ENCODE measurements at regions of chrX and their contacts with region 1.

Region 1: GRCh38 chrX:65595460-65595876 is 60.9 kb upstream of the LAS1L start:
- DNase-seq: peak; percentile 99
- H3K4me3 Mint-ChIP-seq: peak overlapping the region; percentile 62
- H3K27ac Mint-ChIP-seq: peak overlapping the region; percentile 98
- H3K4me1 Mint-ChIP-seq: peaks cover 47% of the 10 kb centered on the region
- H3K27me3 Mint-ChIP-seq: no peaks in the 10 kb centered on the region

Region 2: GRCh38 chrX:63754860-63755582 is 1840.4 kb before region 1 on chrX:
- CTCF ChIA-PET with region 1: no interaction called
- intact Hi-C with region 1: loop called (anchors 10 kb)
- DNase-seq: peak; percentile 90
- H3K4me3 Mint-ChIP-seq: peak overlapping the region; percentile 90
- H3K27ac Mint-ChIP-seq: peak overlapping the region; percentile 96
- H3K4me1 Mint-ChIP-seq: peaks cover 29% of the 10 kb centered on the region
- H3K27me3 Mint-ChIP-seq: no peaks in the 10 kb centered on the region

Region 3: DNA sequence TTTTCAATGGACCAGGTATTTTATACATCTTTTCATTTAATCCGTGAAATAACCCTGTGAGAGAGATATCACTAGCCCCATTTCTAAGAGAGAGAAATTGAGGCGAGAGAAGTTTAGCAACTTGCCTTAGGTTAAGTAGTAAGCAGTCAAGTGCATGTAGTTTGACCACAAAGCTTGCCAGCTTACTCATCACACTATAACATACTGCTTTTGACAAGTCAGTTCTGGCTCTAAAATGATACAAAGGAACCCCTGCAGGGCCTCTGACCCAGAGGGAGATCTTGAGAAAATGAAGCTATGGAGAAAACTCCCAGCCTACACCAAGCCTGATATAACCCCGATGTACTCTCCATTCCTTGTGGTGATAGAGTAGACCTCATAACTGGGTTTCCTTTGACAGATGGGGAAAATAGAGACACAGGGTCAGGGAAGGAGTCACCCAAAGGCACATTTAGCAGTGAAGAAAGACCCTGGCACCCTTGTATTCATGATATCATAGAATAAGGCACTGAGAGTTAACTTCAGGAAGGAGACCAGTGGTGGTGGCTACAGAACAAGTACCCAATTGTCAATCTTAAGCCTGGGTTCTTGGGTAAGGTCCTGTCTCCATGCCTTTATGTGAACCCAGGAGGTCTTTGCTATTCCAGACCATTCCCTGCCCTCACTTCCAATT is 11.7 kb after region 1 on chrX:
- CTCF ChIA-PET with region 1: interaction called, 6 read pairs
- intact Hi-C with region 1: loop called (anchors 1 kb)
- DNase-seq: peak; percentile 46
- H3K4me3 Mint-ChIP-seq: no peak overlapping the region
- H3K27ac Mint-ChIP-seq: peak overlapping the region; percentile 68
- H3K4me1 Mint-ChIP-seq: peaks cover 66% of the 10 kb centered on the region
- H3K27me3 Mint-ChIP-seq: no peaks in the 10 kb centered on the region

Region 4: DNA sequence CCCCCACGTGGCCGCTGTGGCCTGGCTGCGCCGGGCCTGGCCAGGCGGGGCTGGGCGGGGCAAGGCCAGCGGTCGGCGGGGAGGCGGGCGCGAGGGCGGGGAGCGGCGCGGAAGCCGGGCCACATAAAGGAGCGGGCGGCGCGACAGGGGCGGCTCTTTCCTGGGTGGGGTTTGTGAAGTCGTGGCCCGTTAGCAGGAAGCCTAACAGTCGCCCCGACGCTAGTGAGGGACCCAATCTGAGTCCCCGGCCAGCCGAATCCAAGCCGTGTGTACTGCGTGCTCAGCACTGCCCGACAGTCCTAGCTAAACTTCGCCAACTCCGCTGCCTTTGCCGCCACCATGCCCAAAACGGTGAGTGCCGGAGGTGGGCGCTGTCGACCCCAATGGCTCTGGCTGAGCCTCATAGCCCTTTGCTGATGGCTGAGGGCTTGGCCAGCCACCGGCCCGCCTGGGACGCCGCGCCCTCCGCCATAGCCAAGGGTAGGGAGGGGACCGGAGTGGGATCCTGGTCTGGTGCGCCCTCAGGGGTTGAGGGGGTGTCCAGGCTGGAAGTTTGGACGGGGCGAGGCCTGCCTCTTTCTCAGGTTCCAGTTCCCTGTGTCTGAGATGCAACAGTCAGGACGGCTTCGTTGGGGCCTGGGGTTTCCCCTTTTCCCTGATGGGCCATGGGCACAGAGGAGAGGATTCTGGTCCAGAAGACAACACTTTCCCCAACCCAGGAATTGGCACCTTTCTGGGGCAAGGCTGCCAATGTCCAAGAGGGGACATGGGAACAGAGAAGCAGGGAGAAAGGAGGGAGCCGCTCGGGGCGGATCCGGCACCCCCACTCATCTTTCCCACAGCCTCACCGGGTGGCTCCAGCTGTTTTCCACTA is 72.3 kb after region 1 on chrX and contains the start of gene MSN:
- CTCF ChIA-PET with region 1: interaction called, 6 read pairs
- intact Hi-C with region 1: loop called (anchors 1 kb)
- DNase-seq: peak; percentile 78
- H3K4me3 Mint-ChIP-seq: peak within 1 kb of the TSS; percentile 94
- H3K27ac Mint-ChIP-seq: peak within 1 kb of the TSS; percentile 94
- H3K4me1 Mint-ChIP-seq: peaks cover 23% of the 10 kb centered on the region
- H3K27me3 Mint-ChIP-seq: no peaks in the 10 kb centered on the region
- total RNA-seq, gene MSN: 482 to 507 TPM

Region 5: DNA sequence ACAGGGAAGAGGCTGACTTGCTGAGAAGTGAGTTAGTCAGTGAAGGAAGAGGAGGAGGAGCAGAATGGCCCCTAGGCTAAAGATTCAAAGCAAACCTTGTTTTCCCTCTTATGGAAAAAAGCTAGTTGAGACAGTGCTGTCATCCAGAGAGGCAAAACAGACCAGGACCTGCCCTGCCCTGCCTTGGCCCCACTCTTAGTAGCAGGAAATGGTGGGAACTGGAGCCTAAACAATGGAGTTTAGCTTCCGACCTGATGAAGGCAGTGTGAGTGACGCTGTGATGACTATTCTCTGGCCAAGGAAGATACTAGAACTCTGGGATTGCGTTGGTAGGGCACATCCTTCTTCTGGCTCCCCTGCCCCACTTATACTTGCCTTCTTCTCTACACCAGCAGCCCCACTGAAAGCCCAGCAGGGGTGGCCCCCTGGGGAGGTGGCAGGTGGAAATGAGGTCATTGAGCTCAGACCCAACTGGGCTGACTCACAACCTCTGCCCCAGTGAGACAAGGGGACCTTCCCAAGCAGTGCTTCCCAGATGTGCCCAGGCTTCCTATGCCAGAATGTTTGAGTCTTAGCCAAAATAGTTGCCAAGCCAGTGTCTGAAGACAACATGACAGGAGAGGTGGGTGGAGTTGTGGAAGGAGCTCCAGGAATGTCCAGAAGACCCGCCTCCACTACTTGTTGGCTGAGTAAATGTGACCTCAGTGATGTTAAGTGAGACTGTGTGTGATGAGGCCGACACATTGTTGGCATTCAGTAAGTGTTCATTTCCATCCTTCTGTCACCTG is 110.8 kb after region 1 on chrX:
- CTCF ChIA-PET with region 1: interaction called, 9 read pairs
- intact Hi-C with region 1: loop called (anchors 1 kb)
- DNase-seq: peak; percentile 83
- H3K4me3 Mint-ChIP-seq: peak overlapping the region; percentile 52
- H3K27ac Mint-ChIP-seq: peak overlapping the region; percentile 96
- H3K4me1 Mint-ChIP-seq: peaks cover 68% of the 10 kb centered on the region
- H3K27me3 Mint-ChIP-seq: no peaks in the 10 kb centered on the region

Region 6: GRCh38 chrX:65866146-65866545 is 270.7 kb after region 1 on chrX:
- CTCF ChIA-PET with region 1: no interaction called
- intact Hi-C with region 1: loop called (anchors 1 kb)
- DNase-seq: peak; percentile 58
- H3K4me3 Mint-ChIP-seq: no peak overlapping the region
- H3K27ac Mint-ChIP-seq: peak overlapping the region; percentile 58
- H3K4me1 Mint-ChIP-seq: peaks cover 36% of the 10 kb centered on the region
- H3K27me3 Mint-ChIP-seq: no peaks in the 10 kb centered on the region

Region 7: DNA sequence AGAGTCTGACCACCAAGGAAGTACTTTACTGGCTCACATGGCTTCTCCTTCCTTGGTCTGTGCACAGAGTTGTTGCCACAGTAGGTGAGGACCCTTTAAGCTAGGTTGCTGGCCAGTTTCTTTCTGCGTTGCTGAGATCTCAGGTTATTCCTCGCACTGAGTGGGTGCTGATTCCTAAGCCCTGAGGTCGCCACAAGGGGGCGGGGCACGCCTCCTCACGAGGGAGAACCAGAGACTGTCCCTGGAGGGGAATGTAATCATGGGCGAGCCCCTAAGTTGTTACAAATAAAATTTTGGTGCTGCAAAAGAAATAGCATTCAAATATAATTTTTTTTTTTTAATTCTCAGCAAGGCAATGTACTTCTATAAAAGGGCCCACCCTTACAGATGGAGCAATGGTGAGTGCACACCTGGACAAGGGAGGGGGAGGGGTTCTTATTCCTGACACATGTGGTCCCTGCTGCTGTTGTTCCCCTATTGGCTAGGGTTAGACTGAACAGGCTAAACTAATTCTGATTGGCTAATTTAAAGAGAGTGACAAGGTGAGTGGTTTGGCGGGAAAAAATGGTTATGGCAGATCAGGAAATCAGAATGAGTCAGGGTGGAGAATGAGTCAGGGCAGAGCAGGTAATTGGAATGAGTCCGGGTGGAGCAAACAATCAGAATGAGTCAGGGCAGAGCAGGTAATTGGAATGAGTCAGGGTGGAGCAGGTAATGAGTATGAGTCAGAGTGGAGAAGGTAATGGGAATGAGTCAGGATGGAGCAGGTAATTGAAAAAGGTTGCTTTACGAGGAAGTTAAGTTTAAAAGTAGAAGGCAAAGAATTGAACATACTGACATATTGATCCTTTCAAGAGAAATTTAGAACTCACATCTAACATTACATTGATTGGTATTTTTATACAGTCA is 337.0 kb after region 1 on chrX:
- CTCF ChIA-PET with region 1: no interaction called
- intact Hi-C with region 1: loop called (anchors 2 kb)
- DNase-seq: peak; percentile 66
- H3K4me3 Mint-ChIP-seq: no peak overlapping the region
- H3K27ac Mint-ChIP-seq: peak overlapping the region; percentile 73
- H3K4me1 Mint-ChIP-seq: peaks cover 20% of the 10 kb centered on the region
- H3K27me3 Mint-ChIP-seq: no peaks in the 10 kb centered on the region

Measured in activated naive CD4-positive, alpha-beta T cell treated with anti-CD3 and anti-CD28 coated beads for 36 hours (primary cell).